PC-9 (cell line): ENCODE measurements at regions of chr21 and their contacts with region 1.

Region 1: GRCh38 chr21:32727687-32728455 is at the start of gene SYNJ1:
- DNase-seq: peak; percentile 75 to 93
- H3K4me3 ChIP-seq: peak within 1 kb of the TSS; percentile 71
- H3K27ac ChIP-seq: peak within 1 kb of the TSS; percentile 37; the same call in 1 of the 2 replicates
- H3K4me1 ChIP-seq: peaks cover 14% of the 10 kb centered on the region
- H3K27me3 ChIP-seq: no peaks in the 10 kb centered on the region
- CTCF ChIP-seq: no peak
- total RNA-seq, gene SYNJ1: 3.3 and 4.8 TPM in 2 replicates

Region 2: GRCh38 chr21:32356874-32357395 is 370.9 kb before region 1 on chr21:
- CTCF ChIA-PET with region 1: no interaction called
- POLR2A ChIA-PET with region 1: interaction called, 12 read pairs
- intact Hi-C with region 1: no loop called
- DNase-seq: no peak
- H3K4me3 ChIP-seq: no peak overlapping the region
- H3K27ac ChIP-seq: no peak overlapping the region
- H3K4me1 ChIP-seq: no peaks in the 10 kb centered on the region
- H3K27me3 ChIP-seq: no peaks in the 10 kb centered on the region
- CTCF ChIP-seq: no peak

Region 3: DNA sequence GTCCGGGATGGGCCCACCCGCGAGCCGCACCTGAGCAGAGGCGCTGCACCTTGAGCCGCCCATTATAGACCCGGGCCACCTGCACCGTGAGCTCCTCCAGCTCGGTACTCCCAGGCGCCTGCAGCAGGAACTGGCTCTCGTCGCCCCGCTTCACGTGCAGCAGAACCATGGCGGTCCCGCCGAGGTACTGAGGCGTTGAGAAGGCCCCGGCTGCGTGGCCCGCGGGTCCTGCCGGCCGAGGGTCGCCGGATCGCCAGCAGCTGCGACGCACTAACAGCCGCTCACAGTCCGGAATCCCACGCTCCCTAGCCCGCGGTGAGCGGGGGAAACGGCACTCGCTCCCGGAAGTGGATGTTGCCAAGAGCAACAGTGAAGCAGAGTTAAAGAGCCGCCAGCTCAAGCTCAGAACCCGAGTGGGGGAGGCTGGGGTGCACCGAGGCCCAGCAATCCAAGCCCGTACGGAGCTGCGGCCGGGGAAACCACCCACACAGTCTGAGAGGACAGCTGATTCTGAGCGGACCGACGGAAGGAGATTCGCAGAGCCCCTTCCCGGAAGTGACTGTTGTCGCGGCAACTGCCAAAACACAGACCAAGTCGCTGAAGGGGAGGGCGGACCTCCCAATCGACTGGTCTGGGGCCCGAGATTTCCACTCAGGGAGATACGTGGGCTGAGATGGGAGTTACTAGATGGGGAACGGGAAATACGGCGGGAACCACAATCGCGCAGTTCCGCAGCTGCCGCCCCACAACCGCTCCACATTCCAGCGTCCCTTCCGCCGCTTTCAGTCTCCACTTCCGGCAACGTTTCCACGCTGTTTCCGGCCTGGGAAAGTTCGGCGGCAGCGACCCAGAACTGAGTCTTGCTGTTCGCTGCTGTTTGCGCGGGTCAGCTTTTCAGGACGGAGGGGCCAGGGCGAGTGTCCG is 115.5 kb before region 1 on chr21 and contains the start of gene CFAP298:
- CTCF ChIA-PET with region 1: no interaction called
- POLR2A ChIA-PET with region 1: no interaction called
- intact Hi-C with region 1: loop called (anchors 1 kb)
- DNase-seq: peak; percentile 76 to 81
- H3K4me3 ChIP-seq: peak within 1 kb of the TSS; percentile 90
- H3K27ac ChIP-seq: peak within 1 kb of the TSS; percentile 68
- H3K4me1 ChIP-seq: peaks cover 8% of the 10 kb centered on the region; the same call in 1 of the 2 replicates
- H3K27me3 ChIP-seq: no peaks in the 10 kb centered on the region
- CTCF ChIP-seq: no peak
- total RNA-seq, gene CFAP298: 31.2 and 35.5 TPM in 2 replicates

Region 4: GRCh38 chr21:32666258-32666657 is 61.6 kb before region 1 on chr21:
- CTCF ChIA-PET with region 1: no interaction called
- POLR2A ChIA-PET with region 1: no interaction called
- intact Hi-C with region 1: loop called (anchors 5 kb)
- DNase-seq: no peak
- H3K4me3 ChIP-seq: no peak overlapping the region
- H3K27ac ChIP-seq: no peak overlapping the region
- H3K4me1 ChIP-seq: peaks cover 6% of the 10 kb centered on the region
- H3K27me3 ChIP-seq: no peaks in the 10 kb centered on the region
- CTCF ChIP-seq: no peak